GM10248 (cell line): ENCODE measurements at regions of chr9 and their contacts with region 1.

Region 1: DNA sequence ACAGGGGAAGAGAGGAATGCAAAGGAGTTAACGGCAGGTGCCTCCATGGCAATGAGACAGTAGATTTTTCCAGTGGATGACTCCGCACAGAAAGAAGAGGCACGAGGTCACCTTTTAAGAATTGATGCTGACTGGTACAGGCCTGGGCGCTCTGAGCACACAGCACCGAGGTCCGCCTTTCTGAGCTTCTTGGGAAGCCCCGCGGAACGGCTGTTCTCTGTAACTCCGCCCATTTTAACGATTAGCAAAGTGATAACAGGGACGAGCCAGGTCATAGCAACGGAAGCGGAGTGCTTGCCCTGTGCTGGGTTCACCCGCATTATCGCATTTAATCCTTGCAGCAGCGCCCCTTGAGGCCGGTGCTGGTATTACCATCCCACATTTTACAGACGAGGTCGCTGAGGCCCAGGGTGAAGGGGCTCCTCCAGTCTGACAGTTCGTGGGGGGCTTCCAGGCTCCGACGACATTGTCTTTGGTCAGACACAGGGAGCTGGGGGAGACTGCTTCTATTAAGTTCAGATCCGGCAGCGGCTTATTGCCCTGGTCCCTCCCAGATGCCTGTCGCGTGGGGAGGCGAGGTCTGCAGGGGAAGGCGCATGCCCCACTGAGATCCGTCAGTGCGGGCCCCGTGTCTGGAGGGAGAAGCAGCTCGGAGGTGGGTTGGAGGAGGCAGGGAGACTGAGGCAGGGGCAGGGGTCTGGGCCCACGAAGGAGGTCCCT is 22.4 kb upstream of the HMCN2 start:
- DNase-seq: peak; percentile 82
- CTCF ChIP-seq: peak; percentile 89

Region 2: DNA sequence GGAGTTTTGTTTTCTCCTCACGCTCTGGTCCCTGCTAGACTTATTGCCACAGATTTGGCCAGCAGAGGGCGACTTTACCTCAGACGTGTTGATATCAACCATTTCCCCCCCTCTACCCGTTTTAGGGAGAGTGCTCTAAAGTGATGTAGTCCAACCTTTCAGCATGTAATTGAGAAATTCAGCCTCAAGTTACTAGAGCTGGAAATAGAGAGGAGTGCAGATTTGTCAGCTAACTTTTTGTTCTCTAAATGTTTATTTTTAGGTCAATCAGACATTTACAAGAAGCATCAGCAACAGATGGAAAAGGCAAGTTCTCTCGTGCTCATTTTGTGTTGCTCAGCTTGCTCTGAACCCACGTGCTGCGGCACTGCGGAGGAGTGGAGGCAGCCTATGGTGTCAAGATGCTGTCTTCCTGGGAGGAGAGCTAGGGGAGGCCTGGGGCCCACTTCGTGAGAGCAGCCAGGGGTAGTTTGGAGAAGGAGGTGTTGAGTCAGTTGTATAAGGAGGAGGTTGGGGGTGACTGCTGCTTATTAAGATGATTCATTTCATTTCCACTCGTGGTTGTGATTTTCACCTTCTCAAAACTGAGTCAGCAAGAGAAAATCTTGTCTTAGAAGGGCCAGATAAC is 135.8 kb before region 1 on chr9:
- CTCF ChIA-PET with region 1: interaction called, 101 read pairs
- POLR2A ChIA-PET with region 1: no interaction called
- DNase-seq: peak; percentile 76
- CTCF ChIP-seq: peak; percentile 71

Region 3: GRCh38 chr9:130186839-130187522 is 56.2 kb before region 1 on chr9:
- CTCF ChIA-PET with region 1: no interaction called
- POLR2A ChIA-PET with region 1: no interaction called
- DNase-seq: no peak
- CTCF ChIP-seq: no peak

Region 4: DNA sequence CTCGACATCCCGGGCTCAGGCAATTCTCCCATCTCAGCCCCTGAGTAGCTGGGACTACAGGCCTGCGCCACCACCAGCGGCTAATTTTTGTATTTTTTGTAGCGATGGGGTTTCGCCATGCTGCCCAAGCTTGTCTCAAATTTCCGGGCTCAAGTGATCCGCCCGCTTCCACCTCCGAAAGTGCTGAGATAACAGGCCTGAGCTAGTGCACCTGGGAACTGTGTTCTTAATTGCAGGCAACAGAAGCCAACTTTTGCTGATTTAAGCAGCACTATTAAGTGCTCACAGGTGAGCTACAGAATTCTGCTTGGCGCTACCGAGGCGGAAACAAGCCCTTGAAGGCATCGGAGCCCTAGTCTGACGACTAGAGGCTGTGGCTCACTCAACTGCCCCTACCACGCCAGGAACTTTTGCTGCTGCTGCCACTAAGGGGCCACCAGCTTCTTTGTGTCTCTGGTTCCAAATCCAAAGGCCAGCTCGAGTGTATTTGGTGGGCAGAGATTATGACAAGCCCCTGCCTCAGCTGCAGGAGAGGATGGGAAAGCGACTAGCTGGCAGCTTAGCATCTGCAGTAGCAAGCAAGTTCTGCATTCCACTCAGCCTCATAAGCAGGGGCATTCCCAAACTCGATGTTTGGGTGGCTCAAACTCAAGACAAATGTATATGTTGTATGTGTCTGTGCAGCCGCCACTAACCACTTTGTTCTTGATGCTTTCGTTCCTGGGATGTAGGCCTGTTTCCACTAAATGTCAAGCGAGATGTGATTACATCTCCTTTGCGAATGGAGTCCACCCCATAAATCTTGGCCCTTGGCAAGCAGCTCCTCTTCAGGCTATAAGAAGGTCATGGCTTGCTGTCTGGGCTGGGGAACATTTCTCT is 11.8 kb after region 1 on chr9:
- CTCF ChIA-PET with region 1: interaction called, 55 read pairs
- POLR2A ChIA-PET with region 1: no interaction called
- DNase-seq: no peak
- CTCF ChIP-seq: no peak

Region 5: DNA sequence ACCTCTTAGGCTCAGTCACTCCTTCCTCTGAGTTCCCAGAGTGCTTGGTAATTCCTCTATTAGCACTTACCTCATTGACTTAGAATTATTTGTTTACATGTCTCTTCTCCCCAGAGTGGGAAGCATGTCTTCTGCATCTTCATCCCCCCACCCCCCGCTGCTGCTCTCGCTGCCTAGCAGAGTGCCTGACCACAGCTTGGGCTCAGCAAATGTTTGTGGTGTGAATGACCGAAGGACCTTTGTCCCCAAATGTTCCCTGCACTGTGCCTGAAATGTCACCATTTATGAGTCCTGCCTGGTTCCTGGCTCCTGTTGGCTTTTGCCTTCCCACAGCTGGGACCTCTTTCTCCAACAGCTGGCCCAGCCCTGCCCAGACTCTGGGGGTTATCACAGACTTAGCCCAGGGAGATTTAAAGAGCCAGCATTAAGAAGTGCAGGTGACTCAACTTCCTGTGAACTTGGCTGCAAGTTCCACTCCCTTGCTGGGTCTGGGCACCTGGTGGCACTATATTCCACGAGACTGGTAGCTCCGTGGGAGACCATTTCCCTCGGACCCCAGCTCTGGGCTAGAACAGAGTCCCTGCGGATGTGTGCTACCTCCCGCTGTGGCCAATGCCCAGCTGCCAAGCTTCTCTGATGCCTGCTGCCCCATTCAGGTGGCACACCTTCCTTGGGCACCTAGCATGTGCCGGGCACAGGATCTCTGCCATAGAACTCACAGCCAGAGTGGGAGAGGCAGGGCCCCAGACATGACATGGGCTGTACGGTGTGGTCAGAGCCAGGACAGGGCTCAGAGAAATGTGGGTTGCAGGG is 20.6 kb after region 1 on chr9:
- CTCF ChIA-PET with region 1: interaction called, 12 read pairs
- POLR2A ChIA-PET with region 1: no interaction called
- DNase-seq: peak; percentile 4
- CTCF ChIP-seq: no peak